Right ventricle myocardium inferior (tissue), 1 donor: ENCODE measurements at regions of chr17 and their contacts with region 1.

Region 1: DNA sequence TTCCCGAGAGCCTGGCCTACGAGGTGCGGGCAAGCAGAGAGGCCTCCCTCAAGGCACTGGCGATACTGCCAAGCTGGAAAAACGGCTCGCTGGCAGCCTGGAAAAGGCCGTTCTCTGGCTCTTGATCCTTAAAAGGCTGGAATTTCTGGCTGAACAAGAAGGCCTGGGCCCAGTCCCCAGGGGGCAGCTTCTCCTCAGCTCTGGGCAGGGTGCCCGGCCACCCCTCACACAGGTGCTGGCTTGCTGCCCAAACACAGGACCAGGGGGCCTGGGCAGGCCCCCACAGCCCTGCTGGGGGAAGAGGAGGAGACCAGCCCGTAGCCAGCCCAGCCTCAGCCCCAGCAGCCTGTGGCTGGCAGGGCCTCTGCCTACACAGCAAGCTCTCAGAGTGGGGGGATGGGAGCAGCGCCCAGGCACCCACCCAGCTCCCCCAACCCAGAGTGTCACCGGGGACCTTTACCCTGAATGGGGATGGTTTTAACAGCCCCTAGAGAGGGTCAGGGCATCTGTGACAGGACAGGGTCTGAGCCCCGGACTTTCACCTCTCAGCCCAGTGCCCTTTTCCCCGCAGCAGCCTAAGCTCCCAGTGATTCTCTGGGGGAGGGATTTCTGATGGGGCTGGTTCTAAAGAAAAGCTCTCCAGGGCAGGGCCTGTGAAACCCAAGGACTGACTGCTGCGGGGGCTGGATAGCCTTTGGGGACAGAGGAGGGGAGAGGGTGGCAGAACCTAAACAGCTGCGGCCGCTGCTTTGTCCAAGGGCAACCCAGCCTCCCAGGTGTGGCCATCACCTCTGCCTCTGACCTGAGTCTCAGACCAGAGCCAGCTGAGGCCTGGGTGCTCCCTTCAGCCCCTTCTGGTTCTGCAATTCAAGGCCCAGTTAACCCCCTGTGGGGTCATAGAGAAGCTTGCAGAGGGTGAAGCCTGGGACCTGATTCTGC is 38.6 kb upstream of the TOB1 start:
- DNase-seq: peak; percentile 84
- ATAC-seq: peak; percentile 60

Region 2: GRCh38 chr17:50931144-50931908 is 26.5 kb after region 1 on chr17:
- intact Hi-C with region 1: loop called (anchors 1 kb)
- DNase-seq: peak; percentile 94
- ATAC-seq: peak; percentile 96